ENCODE measurements at regions of chr5 and their contacts with region 1.

Region 1: DNA sequence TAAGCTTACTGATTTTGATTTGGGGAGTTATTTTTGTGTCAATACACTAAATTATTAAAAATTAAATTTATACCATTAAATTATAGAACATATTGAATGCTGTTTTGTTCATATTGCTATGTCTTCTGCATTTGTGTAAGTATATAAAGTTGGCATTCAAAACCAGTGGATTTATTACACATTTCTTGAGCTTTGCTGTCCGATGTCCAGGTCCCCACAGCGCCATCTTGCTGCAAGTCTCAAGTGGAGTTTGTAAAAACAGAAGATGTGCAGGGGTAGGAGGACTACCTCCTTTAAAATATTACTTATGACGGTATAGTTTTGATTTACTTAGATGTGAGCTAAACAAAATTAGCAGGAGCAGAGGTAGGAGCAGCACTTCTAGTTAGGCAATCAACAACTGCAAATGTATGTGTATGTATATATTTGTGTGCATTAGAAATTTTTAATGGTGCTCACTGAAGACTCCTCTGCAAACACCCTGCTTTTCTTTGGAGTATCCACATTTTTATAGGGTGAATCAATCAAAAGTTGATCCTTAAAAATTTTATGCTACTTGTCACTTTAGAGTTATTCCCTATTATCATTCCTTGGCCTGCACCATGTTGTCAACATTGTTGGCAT is 37.4 kb downstream of the CPEB4 start:
- DNase-seq: no peak
- H3K4me3 ChIP-seq: peak overlapping the region in 1 of 2 experiments; percentile 28; a peak in 1 of 4 replicates
- H3K27ac ChIP-seq: no peak overlapping the region
- H3K4me1 ChIP-seq: peaks cover 6 to 23% of the 10 kb centered on the region in 2 experiments
- H3K27me3 ChIP-seq: no peaks in the 10 kb centered on the region
- CTCF ChIP-seq: peak; percentile 67
- EP300 ChIP-seq: no peak
- RAD21 ChIP-seq: peak; percentile 77

Region 2: DNA sequence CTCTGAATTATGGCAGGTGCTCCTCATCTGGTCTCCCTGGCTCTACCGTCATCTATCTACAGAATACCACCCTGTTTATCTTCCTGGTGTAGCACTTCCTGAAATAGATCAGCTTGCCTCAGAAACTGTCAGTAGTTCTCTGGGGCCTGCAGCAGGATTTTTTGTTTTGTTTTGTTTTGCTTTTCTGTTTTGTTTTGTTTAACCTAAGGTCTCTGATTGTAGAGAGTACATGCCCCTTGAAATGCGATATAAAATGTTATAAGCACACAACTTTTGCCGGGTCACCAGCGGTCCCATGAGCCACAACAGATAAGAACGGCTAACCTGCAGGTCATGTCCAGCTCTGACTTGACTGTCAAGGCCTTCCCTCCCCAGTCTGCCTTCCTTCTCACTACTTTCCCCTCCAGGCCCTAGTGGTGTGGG is 896.0 kb before region 1 on chr5:
- CTCF ChIA-PET with region 1: no interaction called
- POLR2A ChIA-PET with region 1: no interaction called
- DNase-seq: no peak
- H3K4me3 ChIP-seq: no peak overlapping the region
- H3K27ac ChIP-seq: peak overlapping the region in 1 of 2 experiments; percentile 1; a peak in 1 of 4 replicates
- H3K4me1 ChIP-seq: peaks cover 0 to 16% of the 10 kb centered on the region in 2 experiments; a peak in 2 of 4 replicates
- H3K27me3 ChIP-seq: no peaks in the 10 kb centered on the region
- CTCF ChIP-seq: no peak
- EP300 ChIP-seq: no peak
- RAD21 ChIP-seq: no peak

Region 3: DNA sequence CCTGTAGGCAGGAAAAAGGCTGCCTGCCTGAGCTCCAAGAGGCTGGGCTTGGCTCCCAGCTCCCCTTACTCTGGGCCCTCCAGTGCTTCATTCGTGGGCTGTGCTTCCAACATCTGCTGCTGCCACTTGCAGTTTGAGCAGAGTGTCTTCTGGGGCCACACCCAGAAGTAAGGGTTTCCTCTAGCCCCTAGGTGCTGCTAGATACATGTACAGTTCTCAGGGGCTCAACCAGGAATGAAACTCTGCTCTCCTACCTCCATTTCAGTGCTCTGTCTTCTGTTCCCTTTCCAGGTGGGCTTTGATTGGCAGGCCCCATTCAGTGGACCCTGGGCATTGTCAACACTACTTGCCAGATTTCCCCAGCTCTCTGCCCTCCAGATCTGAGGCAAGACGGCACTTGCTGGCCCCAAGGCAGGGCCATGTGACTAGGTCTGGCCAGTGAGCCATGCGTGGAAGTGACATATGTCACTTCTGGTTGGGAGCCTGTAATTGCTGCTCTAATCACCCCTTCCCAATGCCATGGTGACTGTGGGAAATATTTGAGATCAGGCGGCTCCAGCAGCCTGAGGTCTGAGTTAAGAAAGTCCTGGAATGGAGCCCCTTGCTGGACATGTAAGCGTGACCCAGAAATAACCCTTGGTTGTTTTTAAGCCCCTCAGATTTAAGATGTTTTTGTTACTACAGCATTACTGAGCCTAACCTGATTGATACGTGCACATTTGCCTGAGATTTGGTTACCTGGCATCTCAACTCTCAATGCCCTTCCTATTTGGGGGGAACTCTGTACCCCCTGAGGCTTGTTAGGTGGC is 299.7 kb before region 1 on chr5:
- CTCF ChIA-PET with region 1: interaction called, 23 read pairs
- POLR2A ChIA-PET with region 1: no interaction called
- DNase-seq: no peak
- H3K4me3 ChIP-seq: no peak overlapping the region
- H3K27ac ChIP-seq: no peak overlapping the region
- H3K4me1 ChIP-seq: peaks cover 0 to 12% of the 10 kb centered on the region in 2 experiments; a peak in 1 of 4 replicates
- H3K27me3 ChIP-seq: no peaks in the 10 kb centered on the region
- CTCF ChIP-seq: no peak
- EP300 ChIP-seq: no peak
- RAD21 ChIP-seq: peak; percentile 31; the same call in 1 of the 2 replicates

Region 4: GRCh38 chr5:173941758-173942401 is 16.3 kb after region 1 on chr5:
- CTCF ChIA-PET with region 1: interaction called, 45 read pairs
- POLR2A ChIA-PET with region 1: no interaction called
- DNase-seq: no peak
- H3K4me3 ChIP-seq: no peak overlapping the region
- H3K27ac ChIP-seq: no peak overlapping the region
- H3K4me1 ChIP-seq: no peaks in the 10 kb centered on the region
- H3K27me3 ChIP-seq: no peaks in the 10 kb centered on the region
- CTCF ChIP-seq: no peak
- EP300 ChIP-seq: no peak
- RAD21 ChIP-seq: no peak

Region 5: DNA sequence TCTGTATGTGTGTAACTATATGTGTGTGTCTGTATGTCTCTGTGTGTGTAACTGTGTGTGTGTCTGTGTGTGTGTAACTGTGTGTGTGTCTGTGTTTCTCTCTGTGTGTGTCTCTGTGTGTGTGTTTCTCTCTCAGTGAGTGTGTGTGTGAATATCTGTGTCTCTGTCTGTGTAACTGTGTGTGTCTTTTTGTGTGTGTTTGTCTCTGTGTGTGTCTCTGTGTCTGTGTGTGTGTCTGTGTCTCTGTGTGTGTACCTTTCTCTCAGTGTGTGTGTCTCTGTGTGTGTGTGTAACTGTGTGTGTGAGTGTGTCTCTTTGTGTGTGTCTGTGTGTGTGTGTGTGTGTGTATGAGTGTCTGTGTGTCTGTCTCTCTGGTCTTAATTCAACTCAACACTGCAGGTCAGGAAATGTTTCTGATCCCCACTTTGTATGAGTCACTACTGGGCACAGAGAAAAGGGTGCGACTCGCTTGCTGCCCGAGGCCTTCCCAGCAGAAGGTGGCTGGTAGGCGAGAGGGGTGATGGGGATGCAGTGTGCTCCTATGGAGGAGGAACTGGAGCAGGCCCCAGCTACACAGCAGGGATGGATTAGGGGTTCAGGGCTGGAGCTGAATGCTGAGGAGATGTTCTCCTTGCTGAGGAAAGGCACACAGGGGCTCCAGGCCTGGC is 172.1 kb after region 1 on chr5:
- CTCF ChIA-PET with region 1: no interaction called
- POLR2A ChIA-PET with region 1: no interaction called
- DNase-seq: no peak
- H3K4me3 ChIP-seq: no peak overlapping the region
- H3K27ac ChIP-seq: peak overlapping the region in 1 of 2 experiments; percentile 1; a peak in 1 of 4 replicates
- H3K4me1 ChIP-seq: peaks cover 0 to 59% of the 10 kb centered on the region in 2 experiments; a peak in 2 of 4 replicates
- H3K27me3 ChIP-seq: no peaks in the 10 kb centered on the region
- CTCF ChIP-seq: no peak
- EP300 ChIP-seq: no peak
- RAD21 ChIP-seq: no peak

Measured in SK-N-SH (cell line).